ENCODE measurements at regions of chr2 and their contacts with region 1.

Region 1: GRCh38 chr2:30208452-30208851 is 22.9 kb upstream of the LBH start:
- DNase-seq: peak in 13 of 35 experiments; percentile 14 to 72 (median 28)
- ATAC-seq: peak; percentile 54 to 60 (median 57)
- H3K4me3 ChIP-seq: no peak overlapping the region
- H3K4me3 Mint-ChIP-seq: peak overlapping the region in 2 of 3 donors; percentile 18 to 74
- H3K27ac ChIP-seq: peak overlapping the region; percentile 25
- H3K27ac Mint-ChIP-seq: peak overlapping the region; percentile 81 to 85
- H3K4me1 ChIP-seq: peaks cover 14 to 17% of the 10 kb centered on the region in 2 experiments
- H3K4me1 Mint-ChIP-seq: peaks cover 23% of the 10 kb centered on the region in 3 donors
- H3K27me3 ChIP-seq: no peaks in the 10 kb centered on the region
- H3K27me3 Mint-ChIP-seq: no peaks in the 10 kb centered on the region

Region 2: DNA sequence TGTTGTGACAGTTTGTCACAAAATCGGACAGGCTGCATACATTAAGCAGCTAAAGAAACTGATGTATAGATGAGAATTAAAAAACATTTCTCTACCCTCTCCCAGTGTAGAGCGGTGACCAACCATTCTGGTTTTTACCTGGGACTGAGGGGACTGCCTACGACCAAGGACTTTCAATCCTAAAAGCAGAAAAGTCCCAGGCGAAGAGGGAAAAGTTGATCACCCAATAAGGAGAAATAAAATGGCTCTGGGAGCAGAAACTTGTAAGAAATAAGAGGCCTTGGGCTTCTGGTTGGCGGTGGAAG is 92.5 kb before region 1 on chr2:
- CTCF ChIA-PET with region 1: interaction called in 1 of 2 experiments, 12 read pairs
- POLR2A ChIA-PET with region 1: no interaction called
- DNase-seq: no peak
- ATAC-seq: no peak
- H3K4me3 ChIP-seq: no peak overlapping the region
- H3K4me3 Mint-ChIP-seq: no peak overlapping the region
- H3K27ac ChIP-seq: no peak overlapping the region
- H3K27ac Mint-ChIP-seq: no peak overlapping the region
- H3K4me1 ChIP-seq: no peaks in the 10 kb centered on the region
- H3K4me1 Mint-ChIP-seq: peaks cover 4 to 6% (median 5%) of the 10 kb centered on the region in 3 donors
- H3K27me3 ChIP-seq: peaks cover 0 to 19% of the 10 kb centered on the region in 2 experiments
- H3K27me3 Mint-ChIP-seq: peaks cover 8 to 9% of the 10 kb centered on the region in 2 donors

Region 3: DNA sequence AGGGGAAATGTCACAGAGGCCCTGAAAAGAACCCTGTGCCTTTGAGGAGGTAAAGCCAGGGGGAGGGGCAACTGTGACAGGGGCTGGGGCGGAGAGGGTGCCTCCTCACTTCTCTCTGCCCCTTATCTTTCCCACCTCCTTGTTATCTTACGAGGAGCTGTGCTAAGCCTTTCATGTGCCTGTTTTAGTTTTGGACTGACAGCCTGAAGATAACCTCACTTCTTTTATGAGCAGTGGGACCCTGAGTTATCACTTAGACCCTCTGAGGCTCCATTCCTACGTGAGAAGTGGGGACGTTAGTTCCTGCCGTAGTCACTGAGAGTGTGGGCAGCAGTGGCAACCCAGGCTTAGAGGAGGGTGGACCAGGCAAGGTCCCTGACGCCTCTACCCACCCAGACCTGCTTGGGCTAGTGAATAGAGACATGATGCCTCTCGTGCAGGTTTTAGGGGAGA is 16.6 kb before region 1 on chr2:
- CTCF ChIA-PET with region 1: no interaction called
- POLR2A ChIA-PET with region 1: no interaction called
- DNase-seq: no peak
- ATAC-seq: no peak
- H3K4me3 ChIP-seq: no peak overlapping the region
- H3K4me3 Mint-ChIP-seq: no peak overlapping the region
- H3K27ac ChIP-seq: no peak overlapping the region
- H3K27ac Mint-ChIP-seq: no peak overlapping the region
- H3K4me1 ChIP-seq: no peaks in the 10 kb centered on the region
- H3K4me1 Mint-ChIP-seq: peaks cover 0 to 4% (median 2%) of the 10 kb centered on the region in 3 donors
- H3K27me3 ChIP-seq: peaks cover 0 to 5% of the 10 kb centered on the region in 2 experiments
- H3K27me3 Mint-ChIP-seq: peaks cover 0 to 3% of the 10 kb centered on the region in 2 donors

Region 4: DNA sequence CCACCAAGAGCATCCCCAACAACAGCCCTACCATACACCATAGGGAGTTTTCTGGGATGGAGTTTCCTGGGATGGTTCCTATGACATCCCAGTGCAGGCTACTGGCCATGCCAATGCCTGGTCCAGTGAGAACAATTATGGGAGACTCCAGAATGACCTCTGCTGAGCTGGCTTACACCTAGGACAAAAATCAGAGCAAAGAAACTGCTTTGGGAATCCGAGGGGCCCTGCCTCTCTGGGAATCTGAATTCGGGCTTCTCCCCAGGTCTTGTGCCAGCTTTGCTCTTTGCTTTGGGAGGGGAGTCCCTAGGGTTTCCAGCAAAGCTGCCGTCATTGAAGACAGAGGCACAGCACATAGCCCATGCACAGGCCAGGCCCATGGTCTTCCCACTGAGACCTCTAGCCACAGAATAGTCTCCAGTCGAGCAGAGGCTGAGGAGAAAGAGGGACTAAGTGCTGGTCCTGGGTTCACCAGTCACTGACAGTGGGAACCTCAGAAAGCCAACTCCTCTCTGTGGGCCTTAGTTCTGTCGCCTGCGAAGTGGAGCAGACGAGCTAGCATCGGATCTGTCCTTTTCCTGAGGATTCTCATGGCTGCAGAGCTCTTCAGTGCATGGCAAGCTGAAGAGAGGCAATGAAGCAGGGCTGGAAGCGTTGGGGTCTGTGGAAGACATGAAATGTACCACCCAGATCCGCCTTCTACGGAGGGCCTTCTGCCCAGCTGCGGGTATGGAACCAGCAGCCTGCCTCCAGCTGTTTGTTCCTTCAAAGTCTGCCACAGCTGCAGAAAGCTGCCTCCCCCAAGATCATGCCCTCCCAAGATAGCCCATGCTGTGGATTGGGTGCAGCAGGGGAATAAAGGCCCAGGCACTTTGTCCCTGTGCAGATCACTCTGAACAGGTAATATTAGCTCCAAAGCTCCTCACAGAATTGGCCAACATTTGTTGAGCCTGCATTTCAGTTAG is 11.7 kb after region 1 on chr2:
- CTCF ChIA-PET with region 1: interaction called, 7 to 21 read pairs
- POLR2A ChIA-PET with region 1: interaction called in 1 of 2 experiments, 5 read pairs
- DNase-seq: no peak
- ATAC-seq: no peak
- H3K4me3 ChIP-seq: no peak overlapping the region
- H3K4me3 Mint-ChIP-seq: no peak overlapping the region
- H3K27ac ChIP-seq: no peak overlapping the region
- H3K27ac Mint-ChIP-seq: peak overlapping the region in 1 of 2 donors; percentile 100
- H3K4me1 ChIP-seq: peaks cover 24 to 36% of the 10 kb centered on the region in 2 experiments
- H3K4me1 Mint-ChIP-seq: peaks cover 38 to 43% (median 40%) of the 10 kb centered on the region in 3 donors
- H3K27me3 ChIP-seq: no peaks in the 10 kb centered on the region
- H3K27me3 Mint-ChIP-seq: no peaks in the 10 kb centered on the region

Region 5: GRCh38 chr2:30231212-30231995 is 23.0 kb after region 1 on chr2 and contains the start of gene LBH:
- CTCF ChIA-PET with region 1: interaction called, 4 to 42 read pairs
- POLR2A ChIA-PET with region 1: interaction called, 5 to 10 read pairs
- DNase-seq: peak; percentile 80 to 95 (median 88)
- ATAC-seq: peak; percentile 58 to 69 (median 63)
- H3K4me3 ChIP-seq: peak within 1 kb of the TSS; percentile 89 to 92
- H3K4me3 Mint-ChIP-seq: peak within 1 kb of the TSS; percentile 89 to 98 (median 92)
- H3K27ac ChIP-seq: peak within 1 kb of the TSS; percentile 90
- H3K27ac Mint-ChIP-seq: peak within 1 kb of the TSS; percentile 88 to 96
- H3K4me1 ChIP-seq: peaks cover 23 to 59% of the 10 kb centered on the region in 2 experiments
- H3K4me1 Mint-ChIP-seq: peaks cover 48 to 64% (median 63%) of the 10 kb centered on the region in 3 donors
- H3K27me3 ChIP-seq: no peaks in the 10 kb centered on the region
- H3K27me3 Mint-ChIP-seq: no peaks in the 10 kb centered on the region
- total RNA-seq, gene LBH: 209 to 386 (median 323) TPM

Region 6: GRCh38 chr2:30266051-30266621 is 57.7 kb after region 1 on chr2:
- CTCF ChIA-PET with region 1: interaction called, 3 to 13 read pairs
- POLR2A ChIA-PET with region 1: no interaction called
- DNase-seq: peak; percentile 59 to 83 (median 71)
- ATAC-seq: peak; percentile 94 to 96 (median 96)
- H3K4me3 ChIP-seq: peak overlapping the region; percentile 34 to 50
- H3K4me3 Mint-ChIP-seq: peak overlapping the region; percentile 73 to 80 (median 79)
- H3K27ac ChIP-seq: peak overlapping the region; percentile 89
- H3K27ac Mint-ChIP-seq: peak overlapping the region; percentile 99
- H3K4me1 ChIP-seq: peaks cover 45 to 58% of the 10 kb centered on the region in 2 experiments
- H3K4me1 Mint-ChIP-seq: peaks cover 80 to 91% (median 84%) of the 10 kb centered on the region in 3 donors
- H3K27me3 ChIP-seq: no peaks in the 10 kb centered on the region
- H3K27me3 Mint-ChIP-seq: no peaks in the 10 kb centered on the region

Region 7: GRCh38 chr2:30325600-30326328 is 117.3 kb after region 1 on chr2:
- CTCF ChIA-PET with region 1: no interaction called
- POLR2A ChIA-PET with region 1: no interaction called
- DNase-seq: no peak
- ATAC-seq: peak; percentile 51 to 68 (median 58)
- H3K4me3 ChIP-seq: no peak overlapping the region
- H3K4me3 Mint-ChIP-seq: no peak overlapping the region
- H3K27ac ChIP-seq: no peak overlapping the region
- H3K27ac Mint-ChIP-seq: peak overlapping the region; percentile 82 to 89
- H3K4me1 ChIP-seq: peaks cover 0 to 11% of the 10 kb centered on the region in 2 experiments
- H3K4me1 Mint-ChIP-seq: peaks cover 30 to 44% (median 33%) of the 10 kb centered on the region in 3 donors
- H3K27me3 ChIP-seq: no peaks in the 10 kb centered on the region
- H3K27me3 Mint-ChIP-seq: no peaks in the 10 kb centered on the region

Region 8: DNA sequence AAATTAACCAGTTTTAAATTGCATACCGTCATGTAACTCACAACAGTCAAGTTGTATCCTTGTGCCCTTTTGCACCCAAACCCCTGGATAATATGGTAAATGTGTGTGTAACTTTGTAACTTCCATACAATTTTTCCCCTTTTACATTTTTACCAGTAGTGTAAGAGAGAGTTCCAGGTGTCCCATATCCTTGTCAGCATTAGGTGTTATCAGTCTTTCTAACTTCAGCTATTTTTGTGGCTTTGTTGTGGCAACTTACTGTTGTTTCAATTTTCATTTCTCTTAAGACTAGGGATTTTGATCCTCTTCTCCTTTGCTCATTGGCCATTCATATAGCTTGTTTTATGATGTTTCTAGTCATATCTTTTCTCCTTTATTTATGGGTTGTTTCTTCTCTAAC is 333.2 kb after region 1 on chr2:
- CTCF ChIA-PET with region 1: interaction called, 3 to 11 read pairs
- POLR2A ChIA-PET with region 1: no interaction called
- DNase-seq: peak in 1 of 35 experiments; percentile 2
- ATAC-seq: no peak
- H3K4me3 ChIP-seq: no peak overlapping the region
- H3K4me3 Mint-ChIP-seq: no peak overlapping the region
- H3K27ac ChIP-seq: no peak overlapping the region
- H3K27ac Mint-ChIP-seq: no peak overlapping the region
- H3K4me1 ChIP-seq: no peaks in the 10 kb centered on the region
- H3K4me1 Mint-ChIP-seq: peaks cover 19 to 40% (median 26%) of the 10 kb centered on the region in 3 donors
- H3K27me3 ChIP-seq: no peaks in the 10 kb centered on the region
- H3K27me3 Mint-ChIP-seq: no peaks in the 10 kb centered on the region